HepG2 (cell line): ENCODE measurements at regions of chr17 and their contacts with region 1.

Region 1: GRCh38 chr17:40098846-40099618 is 1.4 kb downstream of the NR1D1 start:
- DNase-seq: peak; percentile 99
- ATAC-seq: peak; percentile 60
- H3K4me3 ChIP-seq: peak overlapping the region; percentile 72 to 86 (median 79)
- H3K27ac ChIP-seq: peak overlapping the region; percentile 95
- H3K4me1 ChIP-seq: peaks cover 67% of the 10 kb centered on the region
- H3K27me3 ChIP-seq: no peaks in the 10 kb centered on the region; a peak in 1 of 5 replicates
- CTCF ChIP-seq: 0 out of 2 replicates have a peak, but pooled peaks have one; percentile 13
- EP300 ChIP-seq: peak; percentile 45 to 74; a peak in 3 of 4 replicates
- POLR2A ChIP-seq: peak; percentile 71 to 82
- RAD21 ChIP-seq: no peak; the same call in none of the 2 replicates

Region 2: GRCh38 chr17:40005520-40005919 is 93.5 kb before region 1 on chr17:
- CTCF ChIA-PET with region 1: no interaction called
- POLR2A ChIA-PET with region 1: no interaction called
- in situ Hi-C with region 1: no loop called
- intact Hi-C with region 1: no loop called
- DNase-seq: no peak
- ATAC-seq: no peak
- H3K4me3 ChIP-seq: no peak overlapping the region
- H3K27ac ChIP-seq: no peak overlapping the region
- H3K4me1 ChIP-seq: peaks cover 20% of the 10 kb centered on the region
- H3K27me3 ChIP-seq: no peaks in the 10 kb centered on the region
- CTCF ChIP-seq: no peak
- EP300 ChIP-seq: no peak
- POLR2A ChIP-seq: no peak
- RAD21 ChIP-seq: no peak

Region 3: GRCh38 chr17:40019140-40019991 is 79.7 kb before region 1 on chr17:
- CTCF ChIA-PET with region 1: no interaction called
- POLR2A ChIA-PET with region 1: interaction called, 14 read pairs
- in situ Hi-C with region 1: no loop called
- intact Hi-C with region 1: no loop called
- DNase-seq: no peak
- ATAC-seq: peak; percentile 21; the same call in 2 of the 3 replicates
- H3K4me3 ChIP-seq: no peak overlapping the region
- H3K27ac ChIP-seq: no peak overlapping the region
- H3K4me1 ChIP-seq: peaks cover 22% of the 10 kb centered on the region
- H3K27me3 ChIP-seq: no peaks in the 10 kb centered on the region
- CTCF ChIP-seq: no peak
- EP300 ChIP-seq: no peak
- POLR2A ChIP-seq: no peak
- RAD21 ChIP-seq: no peak

Region 4: GRCh38 chr17:40069751-40070708 is 29.0 kb before region 1 on chr17:
- CTCF ChIA-PET with region 1: no interaction called
- POLR2A ChIA-PET with region 1: interaction called, 47 read pairs
- in situ Hi-C with region 1: no loop called
- intact Hi-C with region 1: no loop called
- DNase-seq: no peak
- ATAC-seq: no peak
- H3K4me3 ChIP-seq: peak overlapping the region in 1 of 3 experiments; percentile 56; a peak in 1 of 6 replicates
- H3K27ac ChIP-seq: no peak overlapping the region
- H3K4me1 ChIP-seq: peaks cover 90% of the 10 kb centered on the region
- H3K27me3 ChIP-seq: no peaks in the 10 kb centered on the region
- CTCF ChIP-seq: peak; percentile 21; the same call in 1 of the 2 replicates
- EP300 ChIP-seq: no peak
- POLR2A ChIP-seq: no peak
- RAD21 ChIP-seq: no peak

Region 5: GRCh38 chr17:40121181-40122135 is 22.4 kb after region 1 on chr17 and contains the start of gene MSL1:
- CTCF ChIA-PET with region 1: no interaction called
- POLR2A ChIA-PET with region 1: interaction called, 134 read pairs
- in situ Hi-C with region 1: no loop called
- intact Hi-C with region 1: no loop called
- DNase-seq: peak; percentile 70
- ATAC-seq: peak; percentile 70
- H3K4me3 ChIP-seq: peak within 1 kb of the TSS; percentile 91 to 98 (median 97)
- H3K27ac ChIP-seq: peak within 1 kb of the TSS; percentile 77
- H3K4me1 ChIP-seq: peaks cover 45% of the 10 kb centered on the region
- H3K27me3 ChIP-seq: no peaks in the 10 kb centered on the region; a peak in 1 of 5 replicates
- CTCF ChIP-seq: no peak
- EP300 ChIP-seq: no peak
- POLR2A ChIP-seq: peak in 1 of 2 experiments; percentile 54
- RAD21 ChIP-seq: peak; percentile 49; the same call in 1 of the 2 replicates
- total RNA-seq, gene MSL1: 76.1 and 88.5 TPM in 2 replicates

Region 6: GRCh38 chr17:40139566-40140058 is 40.6 kb after region 1 on chr17:
- CTCF ChIA-PET with region 1: no interaction called
- POLR2A ChIA-PET with region 1: interaction called, 67 read pairs
- in situ Hi-C with region 1: no loop called
- intact Hi-C with region 1: no loop called
- DNase-seq: no peak
- ATAC-seq: peak; percentile 25
- H3K4me3 ChIP-seq: peak overlapping the region; percentile 61 to 93 (median 75)
- H3K27ac ChIP-seq: peak overlapping the region; percentile 93
- H3K4me1 ChIP-seq: peaks cover 37% of the 10 kb centered on the region
- H3K27me3 ChIP-seq: no peaks in the 10 kb centered on the region
- CTCF ChIP-seq: no peak
- EP300 ChIP-seq: no peak
- POLR2A ChIP-seq: no peak
- RAD21 ChIP-seq: no peak